ENCODE measurements at regions of chr12 and their contacts with region 1.

Region 1: GRCh38 chr12:111570084-111570961 is 28.8 kb downstream of the ATXN2 start:
- DNase-seq: peak; percentile 66 to 94
- H3K4me3 ChIP-seq: peak overlapping the region; percentile 4; the same call in 1 of the 2 replicates
- H3K27ac ChIP-seq: peak overlapping the region; percentile 74
- H3K4me1 ChIP-seq: peaks cover 52% of the 10 kb centered on the region
- H3K27me3 ChIP-seq: no peaks in the 10 kb centered on the region
- CTCF ChIP-seq: no peak

Region 2: GRCh38 chr12:111607239-111607638 is 36.9 kb after region 1 on chr12:
- CTCF ChIA-PET with region 1: no interaction called
- POLR2A ChIA-PET with region 1: interaction called, 13 read pairs
- intact Hi-C with region 1: no loop called
- DNase-seq: no peak
- H3K4me3 ChIP-seq: no peak overlapping the region
- H3K27ac ChIP-seq: no peak overlapping the region
- H3K4me1 ChIP-seq: peaks cover under 1% of the 10 kb centered on the region; the same call in 1 of the 2 replicates
- H3K27me3 ChIP-seq: no peaks in the 10 kb centered on the region
- CTCF ChIP-seq: no peak

Region 3: DNA sequence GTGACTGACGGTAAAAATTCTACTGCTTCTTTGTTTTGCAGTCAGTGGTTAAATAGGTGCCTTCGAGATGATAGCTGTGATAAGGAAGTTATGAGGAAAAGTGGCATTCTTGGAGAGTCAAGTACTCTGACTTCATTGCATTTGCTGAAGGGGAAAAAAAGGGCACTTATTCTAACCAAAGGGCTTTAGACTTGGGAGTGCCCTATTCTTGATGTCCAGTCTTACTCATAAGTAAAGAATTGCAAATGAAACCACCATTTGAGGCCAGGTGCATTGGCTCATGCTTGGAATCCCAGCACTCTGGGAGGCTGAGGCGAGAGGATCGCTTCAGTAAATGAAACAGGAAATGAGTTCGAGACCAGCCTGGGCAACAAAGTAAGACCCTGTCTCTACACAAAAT is 75.1 kb after region 1 on chr12:
- CTCF ChIA-PET with region 1: no interaction called
- POLR2A ChIA-PET with region 1: no interaction called
- intact Hi-C with region 1: loop called (anchors 1 kb)
- DNase-seq: peak; percentile 68 to 99
- H3K4me3 ChIP-seq: no peak overlapping the region
- H3K27ac ChIP-seq: peak overlapping the region; percentile 88
- H3K4me1 ChIP-seq: peaks cover 28% of the 10 kb centered on the region
- H3K27me3 ChIP-seq: no peaks in the 10 kb centered on the region
- CTCF ChIP-seq: no peak

Region 4: DNA sequence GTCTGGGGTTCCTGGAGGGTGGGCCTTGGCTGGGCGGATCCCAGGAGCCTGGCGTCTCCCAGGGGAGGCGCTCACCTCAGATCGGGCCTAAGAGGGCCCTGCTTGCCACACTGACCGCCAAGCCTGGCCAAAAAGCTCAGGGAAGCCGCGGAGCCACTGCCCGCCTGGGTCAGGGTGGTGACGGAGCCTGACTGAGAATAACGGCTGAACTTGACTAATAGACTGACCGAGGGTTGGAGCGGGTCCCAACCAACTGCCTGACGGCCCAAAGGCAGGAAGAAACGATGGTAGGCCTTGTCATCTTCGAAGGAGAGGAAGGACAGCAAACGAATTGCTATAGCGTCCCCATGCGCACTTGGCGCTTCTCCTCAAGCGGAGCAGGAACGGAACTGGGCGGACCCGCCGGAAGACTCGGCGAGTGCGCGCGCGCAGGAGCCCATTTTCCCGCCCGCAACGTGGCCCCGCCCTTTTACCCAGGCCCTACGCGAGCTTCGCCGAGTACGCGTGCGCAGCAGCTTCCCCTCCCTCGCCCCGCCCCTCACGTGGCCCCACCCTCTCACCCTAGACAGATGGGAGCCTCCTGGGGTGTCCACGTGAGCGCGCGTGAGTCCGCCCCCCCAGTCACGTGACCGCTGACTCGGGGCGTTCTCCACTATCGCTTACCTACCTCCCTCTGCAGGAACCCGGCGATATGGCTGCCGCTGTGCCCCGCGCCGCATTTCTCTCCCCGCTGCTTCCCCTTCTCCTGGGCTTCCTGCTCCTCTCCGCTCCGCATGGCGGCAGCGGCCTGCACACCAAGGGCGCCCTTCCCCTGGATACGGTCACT is 442.7 kb after region 1 on chr12 and contains the starts of genes ERP29 and TMEM116:
- CTCF ChIA-PET with region 1: no interaction called
- POLR2A ChIA-PET with region 1: no interaction called
- intact Hi-C with region 1: loop called (anchors 5 kb)
- DNase-seq: peak; percentile 91 to 98
- H3K4me3 ChIP-seq: peak within 1 kb of the TSS; percentile 86
- H3K27ac ChIP-seq: peak within 1 kb of the TSS; percentile 88
- H3K4me1 ChIP-seq: peaks cover 36% of the 10 kb centered on the region
- H3K27me3 ChIP-seq: no peaks in the 10 kb centered on the region
- CTCF ChIP-seq: peak; percentile 68
- total RNA-seq, gene ERP29: 131 and 154 TPM in 2 replicates
- total RNA-seq, gene TMEM116: 21.9 and 23.4 TPM in 2 replicates

Measured in PC-9 (cell line).